ENCODE measurements at regions of chr21 and their contacts with region 1.

Region 1: GRCh38 chr21:45120975-45121374 is 46.6 kb downstream of the ADARB1 start:
- DNase-seq: no peak
- H3K4me3 ChIP-seq: no peak overlapping the region
- H3K27ac ChIP-seq: peak overlapping the region; percentile 51 to 81 (median 69)
- H3K4me1 ChIP-seq: peaks cover 0 to 22% (median 7%) of the 10 kb centered on the region in 4 donors
- H3K27me3 ChIP-seq: no peaks in the 10 kb centered on the region
- CTCF ChIP-seq: no peak
- EP300 ChIP-seq: no peak
- POLR2A ChIP-seq: no peak

Region 2: DNA sequence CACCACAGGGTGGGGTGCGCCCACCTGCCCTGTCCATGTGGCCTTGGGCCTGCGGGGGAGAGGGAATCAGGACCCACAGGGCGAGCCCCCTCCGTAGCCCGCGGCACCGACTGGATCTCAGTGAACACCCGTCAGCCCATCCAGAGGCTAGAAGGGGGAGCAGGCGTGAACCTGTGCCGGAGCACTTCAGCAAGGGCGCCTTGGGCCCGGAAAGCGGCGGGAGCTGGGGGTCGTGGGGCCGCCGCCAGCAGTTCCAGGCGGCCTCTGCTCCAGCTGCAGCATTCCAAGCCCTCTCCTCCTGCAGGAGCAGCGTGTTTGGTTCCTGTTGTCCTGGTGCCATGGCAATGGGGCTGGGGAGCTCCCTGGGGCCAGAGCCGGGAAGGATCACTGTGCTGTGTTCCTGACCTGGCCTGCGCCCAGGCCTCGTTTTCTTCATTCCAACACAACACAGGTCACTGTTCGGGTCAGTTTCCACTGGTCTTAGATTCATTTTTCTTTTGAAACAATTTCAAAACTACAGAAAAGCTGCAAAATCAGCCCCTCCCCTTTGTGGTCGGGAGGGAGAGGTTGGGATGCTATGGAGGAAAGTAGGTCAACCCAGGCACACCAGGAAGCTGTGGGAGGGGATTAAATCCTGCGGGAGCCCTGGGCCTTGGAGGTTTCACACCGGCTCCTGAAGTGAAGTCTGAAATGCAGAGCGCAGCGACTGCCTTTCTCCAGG is 162.3 kb before region 1 on chr21:
- in situ Hi-C with region 1: no loop called
- intact Hi-C with region 1: loop called (anchors 5 kb)
- DNase-seq: peak; percentile 55
- H3K4me3 ChIP-seq: no peak overlapping the region
- H3K27ac ChIP-seq: peak overlapping the region; percentile 68 to 87 (median 76)
- H3K4me1 ChIP-seq: peaks cover 9 to 43% (median 23%) of the 10 kb centered on the region in 4 donors
- H3K27me3 ChIP-seq: no peaks in the 10 kb centered on the region
- CTCF ChIP-seq: no peak
- EP300 ChIP-seq: no peak
- POLR2A ChIP-seq: no peak

Region 3: DNA sequence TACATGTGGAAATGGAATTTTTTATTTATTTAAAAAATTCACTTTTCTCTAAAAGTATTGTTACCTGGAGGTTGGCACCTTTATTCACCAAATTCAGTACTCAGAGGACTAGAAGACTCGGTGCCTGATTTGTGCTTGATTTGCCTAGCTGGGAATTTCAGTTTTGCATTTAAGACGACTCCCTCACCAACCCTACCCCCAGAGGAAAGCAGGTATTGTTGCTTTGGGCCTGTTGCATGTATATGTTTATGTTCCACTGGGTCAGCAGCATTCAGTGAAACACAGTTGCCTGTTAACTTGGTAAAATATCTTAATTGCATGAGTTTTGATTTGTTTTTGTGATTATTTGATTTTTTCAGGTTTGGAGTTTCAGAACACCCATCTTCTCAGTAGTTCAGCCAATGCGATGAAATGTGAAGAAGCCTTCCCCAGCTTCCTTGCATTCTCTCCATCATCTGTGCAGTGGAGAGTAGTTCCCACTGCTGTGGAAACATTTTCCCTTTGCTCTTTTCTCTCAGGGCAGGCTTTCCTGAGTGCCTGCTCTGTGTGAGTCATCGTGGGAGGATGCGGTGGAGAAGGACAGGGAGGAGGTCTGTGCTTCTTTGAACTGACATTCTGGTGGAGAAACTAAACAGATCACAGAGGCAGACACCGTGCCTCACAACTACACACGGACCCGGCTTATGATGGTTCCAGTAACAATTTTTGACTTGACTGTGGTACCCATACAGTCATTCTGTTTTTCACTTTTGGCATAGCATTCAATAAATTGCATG is 40.1 kb before region 1 on chr21:
- in situ Hi-C with region 1: no loop called
- intact Hi-C with region 1: loop called (anchors 5 kb)
- DNase-seq: no peak
- H3K4me3 ChIP-seq: no peak overlapping the region
- H3K27ac ChIP-seq: peak overlapping the region; percentile 43 to 78 (median 59)
- H3K4me1 ChIP-seq: peaks cover 0 to 39% (median 20%) of the 10 kb centered on the region in 4 donors
- H3K27me3 ChIP-seq: peaks cover 5% of the 10 kb centered on the region
- CTCF ChIP-seq: no peak
- EP300 ChIP-seq: no peak
- POLR2A ChIP-seq: no peak

Region 4: DNA sequence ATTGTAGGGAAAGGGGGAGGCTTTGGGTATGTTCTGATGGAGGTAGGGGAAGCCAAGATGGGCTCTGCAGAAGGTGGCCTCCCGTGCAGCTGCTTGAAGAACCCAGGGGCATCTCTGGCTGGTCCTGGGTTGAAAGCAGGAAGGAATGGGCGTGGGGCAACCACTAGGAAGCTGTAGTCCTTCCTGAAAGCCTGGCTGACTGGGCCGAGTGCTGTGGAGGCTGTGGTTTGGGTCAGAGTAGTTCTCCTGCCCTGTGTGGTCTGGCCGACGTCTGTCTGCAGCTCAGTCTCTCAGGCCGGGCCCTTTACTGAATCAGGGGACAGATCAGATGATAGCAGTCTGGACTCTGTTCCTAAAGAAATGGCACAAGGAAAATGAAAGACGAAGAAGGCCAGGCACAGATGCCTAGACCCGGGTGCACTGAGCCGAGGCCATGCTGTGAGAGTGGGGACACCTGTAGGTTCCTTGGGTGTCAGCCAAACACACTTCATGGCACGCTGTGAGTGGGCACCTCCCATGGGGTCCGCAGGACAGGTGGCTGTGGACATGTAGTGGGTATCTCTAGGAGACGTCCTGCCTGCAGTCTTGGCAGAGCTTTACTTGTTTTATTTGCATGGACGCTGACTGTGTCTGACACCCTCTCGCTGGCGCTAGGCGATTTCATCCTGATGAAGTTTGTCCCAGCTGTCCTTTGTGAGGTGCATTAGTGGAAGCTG is 79.8 kb after region 1 on chr21:
- in situ Hi-C with region 1: no loop called
- intact Hi-C with region 1: no loop called
- DNase-seq: no peak
- H3K4me3 ChIP-seq: no peak overlapping the region
- H3K27ac ChIP-seq: no peak overlapping the region
- H3K4me1 ChIP-seq: no peaks in the 10 kb centered on the region
- H3K27me3 ChIP-seq: no peaks in the 10 kb centered on the region
- CTCF ChIP-seq: no peak
- EP300 ChIP-seq: no peak
- POLR2A ChIP-seq: no peak

Region 5: GRCh38 chr21:45517249-45518065 is 396.5 kb after region 1 on chr21:
- in situ Hi-C with region 1: no loop called
- intact Hi-C with region 1: no loop called
- DNase-seq: no peak
- H3K4me3 ChIP-seq: no peak overlapping the region
- H3K27ac ChIP-seq: no peak overlapping the region
- H3K4me1 ChIP-seq: peaks cover 0 to 15% (median 6%) of the 10 kb centered on the region in 4 donors
- H3K27me3 ChIP-seq: no peaks in the 10 kb centered on the region
- CTCF ChIP-seq: no peak
- EP300 ChIP-seq: no peak
- POLR2A ChIP-seq: no peak

Measured in transverse colon (tissue), 4 donors.